Heart right ventricle (tissue), 16 donors: ENCODE measurements at regions of chr2 and their contacts with region 1.

Region 1: DNA sequence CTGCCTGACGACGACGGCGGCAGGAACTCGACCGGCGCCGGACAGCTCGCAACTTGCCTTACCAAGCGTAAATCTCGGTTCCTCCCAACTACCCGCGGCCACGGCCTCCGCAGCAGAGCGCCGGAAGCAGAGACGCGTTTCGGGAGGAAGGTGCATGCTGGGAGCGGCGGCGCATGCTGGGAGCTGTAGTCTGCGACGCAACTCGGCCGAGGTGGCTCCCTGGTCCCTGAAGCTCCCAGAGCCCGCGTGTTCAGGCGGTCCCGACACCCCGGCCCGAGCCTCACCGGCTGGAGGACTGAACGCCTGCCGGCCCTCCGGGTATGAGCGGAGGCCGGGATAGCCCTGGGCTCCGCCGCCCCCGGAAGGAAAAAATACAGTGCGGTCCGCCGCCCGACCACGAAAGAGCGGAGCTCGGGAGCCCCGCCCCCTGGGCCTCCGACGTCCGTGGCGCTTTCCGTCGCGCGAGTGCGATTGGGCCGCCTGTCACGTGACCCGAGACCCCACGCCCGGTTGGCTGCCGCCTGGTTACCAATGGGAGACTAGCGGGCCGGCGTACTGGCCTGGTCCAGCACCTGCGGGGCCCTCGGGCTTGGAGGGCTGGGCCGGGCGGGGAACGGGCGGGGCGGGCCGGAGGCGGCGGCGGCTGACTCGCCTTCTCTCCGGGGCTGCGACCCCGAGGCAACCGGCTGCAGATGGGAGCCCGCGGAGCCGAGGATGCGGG is at the start of gene CAPN10:
- DNase-seq: peak; percentile 98
- ATAC-seq: peak; percentile 95 to 99 (median 98)
- H3K4me3 ChIP-seq: peak within 1 kb of the TSS; percentile 70 to 98 (median 92)
- H3K27ac ChIP-seq: peak within 1 kb of the TSS; percentile 94 to 99 (median 96)
- H3K4me1 ChIP-seq: peaks cover 23 to 54% (median 40%) of the 10 kb centered on the region in 9 donors
- H3K27me3 ChIP-seq: no peaks in the 10 kb centered on the region
- CTCF ChIP-seq: no peak
- total RNA-seq, gene CAPN10: 16.8 to 73.8 (median 21.0) TPM

Region 2: GRCh38 chr2:240566203-240567136 is 19.9 kb before region 1 on chr2:
- intact Hi-C with region 1: loop called in 4 of 10 experiments (anchors 1 to 2 kb)
- DNase-seq: peak; percentile 92 to 95
- ATAC-seq: peak; percentile 83 to 92 (median 88)
- H3K4me3 ChIP-seq: peak overlapping the region; percentile 15 to 98 (median 84)
- H3K27ac ChIP-seq: peak overlapping the region; percentile 53 to 100 (median 96)
- H3K4me1 ChIP-seq: peaks cover 19 to 88% (median 63%) of the 10 kb centered on the region in 9 donors
- H3K27me3 ChIP-seq: no peaks in the 10 kb centered on the region
- CTCF ChIP-seq: peak; percentile 85 to 98 (median 94)

Region 3: GRCh38 chr2:240615820-240616547 is 29.6 kb after region 1 on chr2:
- intact Hi-C with region 1: no loop called
- DNase-seq: no peak
- ATAC-seq: no peak
- H3K4me3 ChIP-seq: no peak overlapping the region
- H3K27ac ChIP-seq: no peak overlapping the region
- H3K4me1 ChIP-seq: peaks cover 0 to 36% (median 0%) of the 10 kb centered on the region in 9 donors
- H3K27me3 ChIP-seq: no peaks in the 10 kb centered on the region
- CTCF ChIP-seq: no peak

Region 4: GRCh38 chr2:240832205-240832727 is 245.9 kb after region 1 on chr2:
- intact Hi-C with region 1: loop called in 1 of 10 experiments (anchors 10 kb)
- DNase-seq: peak; percentile 89 to 94
- ATAC-seq: peak; percentile 72 to 94 (median 86)
- H3K4me3 ChIP-seq: peak overlapping the region in 9 of 10 donors; percentile 20 to 50 (median 41)
- H3K27ac ChIP-seq: no peak overlapping the region
- H3K4me1 ChIP-seq: peaks cover 7 to 19% (median 17%) of the 10 kb centered on the region in 9 donors
- H3K27me3 ChIP-seq: peaks cover 0 to 51% (median 38%) of the 10 kb centered on the region in 7 donors
- CTCF ChIP-seq: no peak